Activated naive CD4-positive, alpha-beta T cell treated with anti-CD3 and anti-CD28 coated beads for 36 hours (primary cell): ENCODE measurements at regions of chrX and their contacts with region 1.

Region 1: GRCh38 chrX:101097546-101098453 is at the start of gene CENPI:
- DNase-seq: peak; percentile 95
- H3K4me3 Mint-ChIP-seq: peak within 1 kb of the TSS; percentile 92
- H3K27ac Mint-ChIP-seq: peak within 1 kb of the TSS; percentile 86
- H3K4me1 Mint-ChIP-seq: peaks cover 22% of the 10 kb centered on the region
- H3K27me3 Mint-ChIP-seq: no peaks in the 10 kb centered on the region
- total RNA-seq, gene CENPI: 19.1 to 20.4 TPM

Region 2: GRCh38 chrX:100819837-100820666 is 277.7 kb before region 1 on chrX and contains the start of gene CSTF2:
- CTCF ChIA-PET with region 1: no interaction called
- intact Hi-C with region 1: loop called (anchors 1 kb)
- DNase-seq: peak; percentile 84
- H3K4me3 Mint-ChIP-seq: peak within 1 kb of the TSS; percentile 90
- H3K27ac Mint-ChIP-seq: peak within 1 kb of the TSS; percentile 95
- H3K4me1 Mint-ChIP-seq: peaks cover 11% of the 10 kb centered on the region
- H3K27me3 Mint-ChIP-seq: no peaks in the 10 kb centered on the region
- total RNA-seq, gene CSTF2: 44.3 to 46.8 TPM

Region 3: DNA sequence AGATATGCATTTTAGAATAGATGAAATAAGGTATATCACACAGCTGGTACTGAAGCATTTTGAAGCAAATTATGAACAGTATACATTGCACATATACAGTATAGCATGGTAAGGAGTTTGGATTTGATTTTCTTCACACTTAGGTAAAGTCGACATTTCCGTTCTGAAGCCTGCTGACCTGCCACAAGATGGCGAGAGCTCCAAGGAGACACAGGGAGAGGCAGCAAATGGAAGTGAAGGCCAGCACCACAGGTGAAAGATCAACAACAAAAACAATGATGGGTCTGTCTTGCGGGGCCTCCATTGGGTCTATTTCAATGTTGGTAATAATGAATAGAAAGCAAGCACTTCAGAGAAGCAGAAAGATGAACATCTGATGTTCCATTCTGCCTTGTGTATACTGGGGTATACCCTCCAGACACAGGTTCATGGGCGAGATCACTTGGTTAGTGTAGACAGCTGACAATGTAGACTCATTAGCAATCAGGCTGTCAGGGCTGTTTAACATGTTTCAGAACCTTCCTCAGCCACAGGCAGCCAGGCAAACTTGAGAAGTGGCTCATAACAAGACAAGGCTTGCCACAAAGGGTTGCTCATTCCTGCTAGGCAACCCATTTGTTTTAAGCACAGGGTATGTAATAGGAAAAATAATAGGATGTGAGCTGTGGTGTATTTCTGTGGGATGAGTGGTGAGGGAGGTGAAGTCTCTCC is 202.3 kb before region 1 on chrX:
- CTCF ChIA-PET with region 1: no interaction called
- intact Hi-C with region 1: loop called (anchors 1 kb)
- DNase-seq: peak; percentile 54
- H3K4me3 Mint-ChIP-seq: no peak overlapping the region
- H3K27ac Mint-ChIP-seq: peak overlapping the region; percentile 71
- H3K4me1 Mint-ChIP-seq: no peaks in the 10 kb centered on the region
- H3K27me3 Mint-ChIP-seq: no peaks in the 10 kb centered on the region

Region 4: DNA sequence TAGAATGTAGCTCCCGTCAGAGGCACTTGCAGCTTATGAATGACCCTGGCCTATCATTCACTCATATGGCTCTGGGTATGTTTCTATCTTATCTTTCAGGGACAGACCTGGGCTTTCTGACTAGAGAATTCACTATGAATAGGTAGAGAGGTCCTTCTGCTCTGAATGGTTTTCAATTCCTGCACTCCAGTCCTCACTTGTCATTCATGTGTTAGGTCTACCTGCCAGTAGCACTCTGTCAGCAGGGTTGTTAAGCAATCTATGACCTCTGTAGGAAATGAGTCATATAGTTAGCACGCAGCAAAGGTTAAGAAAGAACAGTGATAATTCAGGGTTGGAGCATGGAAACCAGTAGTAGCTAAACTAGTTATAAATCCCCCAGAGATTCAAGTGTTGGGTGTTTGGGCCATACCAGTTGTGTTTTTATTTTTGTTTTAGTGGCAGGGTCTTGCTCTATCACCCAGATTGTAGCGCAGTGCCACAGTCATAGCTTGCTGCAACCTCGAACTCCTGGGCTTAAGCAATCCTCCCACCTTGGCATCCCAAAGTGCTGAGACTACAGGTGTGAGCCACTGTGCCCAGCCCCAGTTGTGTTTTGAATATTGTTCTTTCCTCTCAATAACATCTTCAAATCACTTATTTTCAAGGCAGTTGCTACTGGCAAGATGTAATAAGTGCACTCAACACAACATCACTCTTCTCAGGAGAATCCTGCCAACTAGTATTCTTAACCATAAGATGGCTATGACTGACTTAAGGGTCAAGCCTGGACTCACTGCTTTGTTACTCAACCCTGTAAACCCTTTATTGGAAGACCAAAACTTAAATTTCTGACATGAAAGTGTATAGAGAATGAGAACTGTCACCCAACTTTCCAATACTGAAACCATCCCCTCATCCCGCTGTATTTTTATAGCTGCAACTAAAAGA is 103.2 kb before region 1 on chrX:
- CTCF ChIA-PET with region 1: no interaction called
- intact Hi-C with region 1: loop called (anchors 1 kb)
- DNase-seq: peak; percentile 24
- H3K4me3 Mint-ChIP-seq: no peak overlapping the region
- H3K27ac Mint-ChIP-seq: peak overlapping the region; percentile 68
- H3K4me1 Mint-ChIP-seq: peaks cover 17% of the 10 kb centered on the region
- H3K27me3 Mint-ChIP-seq: no peaks in the 10 kb centered on the region

Region 5: GRCh38 chrX:101117701-101118100 is 19.9 kb after region 1 on chrX:
- CTCF ChIA-PET with region 1: no interaction called
- intact Hi-C with region 1: no loop called
- DNase-seq: no peak
- H3K4me3 Mint-ChIP-seq: no peak overlapping the region
- H3K27ac Mint-ChIP-seq: no peak overlapping the region
- H3K4me1 Mint-ChIP-seq: no peaks in the 10 kb centered on the region
- H3K27me3 Mint-ChIP-seq: no peaks in the 10 kb centered on the region

Region 6: DNA sequence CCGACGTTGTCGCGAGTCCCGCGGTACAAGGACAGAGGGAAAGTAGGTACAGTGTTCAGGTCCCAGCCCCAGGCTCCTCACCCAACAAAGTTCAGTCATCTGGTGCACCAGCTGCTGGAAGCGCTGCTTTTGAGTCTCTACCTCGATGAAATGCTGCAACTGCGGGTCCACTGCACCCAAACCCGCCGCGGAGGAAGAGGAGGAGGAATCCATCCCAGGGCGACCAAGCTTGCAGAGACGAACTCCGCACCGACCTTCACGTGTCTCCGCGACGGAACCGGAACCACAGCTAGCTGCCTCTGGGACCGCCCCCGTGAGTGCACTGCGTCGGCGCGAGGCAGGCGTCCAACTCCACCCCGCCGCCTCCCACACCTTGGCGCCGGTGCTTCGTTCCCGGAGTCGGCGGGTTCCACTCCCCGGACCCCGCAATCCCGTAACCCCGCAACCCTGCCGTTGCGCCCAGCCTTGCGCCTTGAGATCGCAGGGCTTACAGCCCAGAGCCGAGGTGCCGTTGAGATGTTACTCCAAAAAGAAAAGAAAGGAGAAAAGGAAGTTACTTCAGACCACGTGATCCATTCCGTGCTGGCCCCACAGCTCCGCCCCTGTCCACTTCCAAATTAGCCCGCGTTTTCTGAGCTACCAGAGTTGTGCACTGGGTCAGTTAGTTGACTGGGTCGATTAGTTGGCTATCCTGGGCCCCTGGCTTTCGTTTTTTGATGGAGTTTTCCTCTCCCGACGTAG is 250.8 kb after region 1 on chrX and contains the start of gene TIMM8A:
- CTCF ChIA-PET with region 1: no interaction called
- intact Hi-C with region 1: loop called (anchors 2 kb)
- DNase-seq: peak; percentile 82
- H3K4me3 Mint-ChIP-seq: peak within 1 kb of the TSS; percentile 84
- H3K27ac Mint-ChIP-seq: peak within 1 kb of the TSS; percentile 93
- H3K4me1 Mint-ChIP-seq: peaks cover 16% of the 10 kb centered on the region
- H3K27me3 Mint-ChIP-seq: no peaks in the 10 kb centered on the region
- total RNA-seq, gene TIMM8A: 14.9 to 15.9 TPM

Region 7: GRCh38 chrX:101407748-101408531 is 310.1 kb after region 1 on chrX and contains the starts of genes GLA and HNRNPH2:
- CTCF ChIA-PET with region 1: no interaction called
- intact Hi-C with region 1: loop called (anchors 1 kb)
- DNase-seq: peak; percentile 94
- H3K4me3 Mint-ChIP-seq: peak within 1 kb of the TSS; percentile 99
- H3K27ac Mint-ChIP-seq: peak within 1 kb of the TSS; percentile 95
- H3K4me1 Mint-ChIP-seq: peaks cover 28% of the 10 kb centered on the region
- H3K27me3 Mint-ChIP-seq: no peaks in the 10 kb centered on the region
- total RNA-seq, gene GLA: 40.7 to 45.8 TPM
- total RNA-seq, gene HNRNPH2: 31.5 to 31.9 TPM